ENCODE measurements at regions of chr18 and their contacts with region 1.

Region 1: DNA sequence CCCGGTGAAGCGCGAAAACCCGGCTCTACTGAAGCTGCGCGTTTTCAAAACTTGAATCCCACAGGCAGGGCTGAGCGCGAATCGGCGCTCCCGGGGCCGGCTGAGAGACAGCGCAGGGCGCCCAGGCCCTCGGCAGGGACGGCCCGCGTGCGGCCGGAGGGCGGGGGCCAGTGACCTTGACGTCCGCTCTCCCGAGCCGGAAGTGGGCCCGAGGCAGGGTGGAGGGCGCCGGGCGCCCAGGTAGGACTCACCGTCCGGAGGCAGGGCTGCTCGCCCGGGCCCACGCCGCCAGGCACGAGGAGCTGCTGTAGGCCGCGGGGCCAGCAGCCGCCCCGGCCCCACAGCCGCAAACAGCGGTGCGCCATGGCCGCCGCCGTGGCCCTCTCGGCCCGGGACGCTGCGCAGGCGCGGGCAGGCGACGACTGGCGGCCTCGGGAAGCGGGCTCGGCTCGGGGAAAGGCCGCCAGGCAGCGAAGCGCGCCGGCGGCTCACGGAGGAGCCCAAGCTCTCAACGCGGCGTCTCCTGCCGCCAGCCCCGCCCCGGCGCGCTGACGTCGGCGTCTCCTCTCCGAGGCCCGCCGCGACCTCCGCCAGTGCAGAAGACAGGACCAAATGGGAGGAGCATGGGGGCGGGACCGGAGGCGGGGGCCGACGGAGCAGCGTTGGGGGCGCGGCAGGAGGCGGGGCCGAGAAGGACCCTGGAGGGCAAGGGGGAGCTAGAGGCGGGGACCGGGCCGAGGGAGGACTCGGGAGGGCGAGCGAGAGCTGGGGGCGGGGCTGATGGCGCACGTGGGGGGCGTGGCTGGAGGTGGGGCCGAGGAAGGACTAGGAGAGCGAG is at the start of gene AFG3L2:
- DNase-seq: peak; percentile 99 to 100 (median 100)
- ATAC-seq: peak; percentile 93
- H3K4me3 ChIP-seq: peak within 1 kb of the TSS; percentile 93
- H3K4me3 Mint-ChIP-seq: peak within 1 kb of the TSS; percentile 85 to 93 (median 92)
- H3K27ac ChIP-seq: peak within 1 kb of the TSS; percentile 97
- H3K27ac Mint-ChIP-seq: peak within 1 kb of the TSS; percentile 77 to 95 (median 90)
- H3K4me1 ChIP-seq: peaks cover 13 to 28% of the 10 kb centered on the region in 2 donors
- H3K4me1 Mint-ChIP-seq: peaks cover 32 to 52% (median 46%) of the 10 kb centered on the region in 7 donors
- H3K27me3 ChIP-seq: no peaks in the 10 kb centered on the region
- H3K27me3 Mint-ChIP-seq: peaks cover 0 to 22% (median 0%) of the 10 kb centered on the region in 5 donors
- total RNA-seq, gene AFG3L2: 26.3 to 42.3 (median 32.0) TPM

Region 2: GRCh38 chr18:11178951-11179549 is 1197.9 kb before region 1 on chr18:
- CTCF ChIA-PET with region 1: no interaction called
- POLR2A ChIA-PET with region 1: no interaction called
- intact Hi-C with region 1: no loop called
- DNase-seq: no peak
- ATAC-seq: no peak
- H3K4me3 ChIP-seq: no peak overlapping the region
- H3K4me3 Mint-ChIP-seq: no peak overlapping the region
- H3K27ac ChIP-seq: no peak overlapping the region
- H3K27ac Mint-ChIP-seq: peak overlapping the region in 1 of 9 donors; percentile 43
- H3K4me1 ChIP-seq: no peaks in the 10 kb centered on the region
- H3K4me1 Mint-ChIP-seq: peaks cover 0 to 2% (median 0%) of the 10 kb centered on the region in 7 donors
- H3K27me3 ChIP-seq: no peaks in the 10 kb centered on the region
- H3K27me3 Mint-ChIP-seq: no peaks in the 10 kb centered on the region

Region 3: GRCh38 chr18:12308386-12309100 is 68.4 kb before region 1 on chr18:
- CTCF ChIA-PET with region 1: no interaction called
- POLR2A ChIA-PET with region 1: no interaction called
- intact Hi-C with region 1: loop called in 1 of 2 experiments (anchors 2 kb)
- DNase-seq: peak in 2 of 9 donors; percentile 28 to 60
- ATAC-seq: peak; percentile 79
- H3K4me3 ChIP-seq: no peak overlapping the region
- H3K4me3 Mint-ChIP-seq: peak overlapping the region in 5 of 10 donors; percentile 48 to 78 (median 54)
- H3K27ac ChIP-seq: no peak overlapping the region
- H3K27ac Mint-ChIP-seq: peak overlapping the region in 1 of 9 donors; percentile 46
- H3K4me1 ChIP-seq: peaks cover 0 to 4% of the 10 kb centered on the region in 2 donors
- H3K4me1 Mint-ChIP-seq: peaks cover 4 to 17% (median 12%) of the 10 kb centered on the region in 7 donors
- H3K27me3 ChIP-seq: peaks cover 0 to 4% of the 10 kb centered on the region in 2 donors
- H3K27me3 Mint-ChIP-seq: peaks cover 35 to 63% (median 53%) of the 10 kb centered on the region in 5 donors

Region 4: GRCh38 chr18:12333506-12334279 is 43.2 kb before region 1 on chr18:
- CTCF ChIA-PET with region 1: no interaction called
- POLR2A ChIA-PET with region 1: no interaction called
- intact Hi-C with region 1: no loop called
- DNase-seq: no peak
- ATAC-seq: no peak
- H3K4me3 ChIP-seq: no peak overlapping the region
- H3K4me3 Mint-ChIP-seq: no peak overlapping the region
- H3K27ac ChIP-seq: no peak overlapping the region
- H3K27ac Mint-ChIP-seq: peak overlapping the region in 1 of 9 donors; percentile 14
- H3K4me1 ChIP-seq: no peaks in the 10 kb centered on the region
- H3K4me1 Mint-ChIP-seq: peaks cover 0 to 4% (median 0%) of the 10 kb centered on the region in 7 donors
- H3K27me3 ChIP-seq: no peaks in the 10 kb centered on the region
- H3K27me3 Mint-ChIP-seq: no peaks in the 10 kb centered on the region

Region 5: GRCh38 chr18:12408247-12408869 is 31.4 kb after region 1 on chr18:
- CTCF ChIA-PET with region 1: no interaction called
- POLR2A ChIA-PET with region 1: interaction called, 3 read pairs
- intact Hi-C with region 1: loop called (anchors 1 kb)
- DNase-seq: no peak
- ATAC-seq: no peak
- H3K4me3 ChIP-seq: no peak overlapping the region
- H3K4me3 Mint-ChIP-seq: peak overlapping the region; percentile 42 to 88 (median 62)
- H3K27ac ChIP-seq: no peak overlapping the region
- H3K27ac Mint-ChIP-seq: peak overlapping the region in 4 of 9 donors; percentile 18 to 65 (median 40)
- H3K4me1 ChIP-seq: peaks cover 9 to 13% of the 10 kb centered on the region in 2 donors
- H3K4me1 Mint-ChIP-seq: peaks cover 10 to 30% (median 25%) of the 10 kb centered on the region in 7 donors
- H3K27me3 ChIP-seq: no peaks in the 10 kb centered on the region
- H3K27me3 Mint-ChIP-seq: peaks cover 7 to 41% (median 25%) of the 10 kb centered on the region in 5 donors

Region 6: GRCh38 chr18:12702221-12703095 is 325.5 kb after region 1 on chr18 and contains the starts of genes CEP76 and PSMG2:
- CTCF ChIA-PET with region 1: no interaction called
- POLR2A ChIA-PET with region 1: interaction called, 14 read pairs
- intact Hi-C with region 1: loop called (anchors 1 kb)
- DNase-seq: peak; percentile 77 to 88 (median 84)
- ATAC-seq: peak; percentile 89
- H3K4me3 ChIP-seq: peak within 1 kb of the TSS; percentile 97
- H3K4me3 Mint-ChIP-seq: peak within 1 kb of the TSS; percentile 92 to 99 (median 98)
- H3K27ac ChIP-seq: peak within 1 kb of the TSS; percentile 96
- H3K27ac Mint-ChIP-seq: peak within 1 kb of the TSS; percentile 91 to 100 (median 96)
- H3K4me1 ChIP-seq: peaks cover 17 to 20% of the 10 kb centered on the region in 2 donors
- H3K4me1 Mint-ChIP-seq: peaks cover 36 to 63% (median 50%) of the 10 kb centered on the region in 7 donors
- H3K27me3 ChIP-seq: no peaks in the 10 kb centered on the region
- H3K27me3 Mint-ChIP-seq: no peaks in the 10 kb centered on the region
- total RNA-seq, gene CEP76: 6.9 to 13.2 (median 11.1) TPM
- total RNA-seq, gene PSMG2: 49.9 to 104 (median 59.9) TPM

Region 7: GRCh38 chr18:12990967-12991838 is 614.3 kb after region 1 on chr18 and contains the start of gene CEP192:
- CTCF ChIA-PET with region 1: no interaction called
- POLR2A ChIA-PET with region 1: interaction called, 3 read pairs
- intact Hi-C with region 1: loop called (anchors 1 kb)
- DNase-seq: peak; percentile 90 to 99 (median 97)
- ATAC-seq: peak; percentile 99
- H3K4me3 ChIP-seq: peak within 1 kb of the TSS; percentile 85
- H3K4me3 Mint-ChIP-seq: peak within 1 kb of the TSS in 9 of 10 donors; percentile 90 to 99 (median 98)
- H3K27ac ChIP-seq: peak within 1 kb of the TSS; percentile 82
- H3K27ac Mint-ChIP-seq: peak within 1 kb of the TSS; percentile 88 to 97 (median 93)
- H3K4me1 ChIP-seq: peaks cover 27 to 29% of the 10 kb centered on the region in 2 donors
- H3K4me1 Mint-ChIP-seq: peaks cover 10 to 29% (median 20%) of the 10 kb centered on the region in 7 donors
- H3K27me3 ChIP-seq: no peaks in the 10 kb centered on the region
- H3K27me3 Mint-ChIP-seq: peaks cover 0 to 1% (median 0%) of the 10 kb centered on the region in 5 donors
- total RNA-seq, gene CEP192: 30.9 to 45.0 (median 39.7) TPM

Measured in naive thymus-derived CD4-positive, alpha-beta T cell (primary cell).